ENCODE measurements at regions of chr2 and their contacts with region 1.

Region 1: GRCh38 chr2:218395797-218396687 is 3.6 kb upstream of the CTDSP1 start:
- DNase-seq: peak; percentile 97
- H3K4me3 ChIP-seq: peak overlapping the region; percentile 88 to 96 (median 93)
- H3K27ac ChIP-seq: peak overlapping the region; percentile 98 to 100 (median 100)
- H3K4me1 ChIP-seq: peaks cover 17 to 41% (median 36%) of the 10 kb centered on the region in 4 donors
- H3K27me3 ChIP-seq: no peaks in the 10 kb centered on the region
- CTCF ChIP-seq: peak; percentile 94 to 98 (median 97)
- EP300 ChIP-seq: no peak
- POLR2A ChIP-seq: peak; percentile 23

Region 2: GRCh38 chr2:218269899-218270720 is 125.9 kb before region 1 on chr2 and contains the starts of genes AAMP and PNKD:
- intact Hi-C with region 1: loop called (anchors 5 kb)
- DNase-seq: peak; percentile 100
- H3K4me3 ChIP-seq: peak within 1 kb of the TSS; percentile 86 to 94 (median 90)
- H3K27ac ChIP-seq: peak within 1 kb of the TSS; percentile 79 to 87 (median 84)
- H3K4me1 ChIP-seq: peaks cover 47 to 72% (median 52%) of the 10 kb centered on the region in 4 donors
- H3K27me3 ChIP-seq: no peaks in the 10 kb centered on the region
- CTCF ChIP-seq: peak in 2 of 3 experiments; percentile 25 to 28
- EP300 ChIP-seq: no peak
- POLR2A ChIP-seq: peak; percentile 49
- total RNA-seq, gene AAMP: 104 to 169 (median 144) TPM
- total RNA-seq, gene PNKD: 40.3 to 74.1 (median 56.5) TPM

Region 3: DNA sequence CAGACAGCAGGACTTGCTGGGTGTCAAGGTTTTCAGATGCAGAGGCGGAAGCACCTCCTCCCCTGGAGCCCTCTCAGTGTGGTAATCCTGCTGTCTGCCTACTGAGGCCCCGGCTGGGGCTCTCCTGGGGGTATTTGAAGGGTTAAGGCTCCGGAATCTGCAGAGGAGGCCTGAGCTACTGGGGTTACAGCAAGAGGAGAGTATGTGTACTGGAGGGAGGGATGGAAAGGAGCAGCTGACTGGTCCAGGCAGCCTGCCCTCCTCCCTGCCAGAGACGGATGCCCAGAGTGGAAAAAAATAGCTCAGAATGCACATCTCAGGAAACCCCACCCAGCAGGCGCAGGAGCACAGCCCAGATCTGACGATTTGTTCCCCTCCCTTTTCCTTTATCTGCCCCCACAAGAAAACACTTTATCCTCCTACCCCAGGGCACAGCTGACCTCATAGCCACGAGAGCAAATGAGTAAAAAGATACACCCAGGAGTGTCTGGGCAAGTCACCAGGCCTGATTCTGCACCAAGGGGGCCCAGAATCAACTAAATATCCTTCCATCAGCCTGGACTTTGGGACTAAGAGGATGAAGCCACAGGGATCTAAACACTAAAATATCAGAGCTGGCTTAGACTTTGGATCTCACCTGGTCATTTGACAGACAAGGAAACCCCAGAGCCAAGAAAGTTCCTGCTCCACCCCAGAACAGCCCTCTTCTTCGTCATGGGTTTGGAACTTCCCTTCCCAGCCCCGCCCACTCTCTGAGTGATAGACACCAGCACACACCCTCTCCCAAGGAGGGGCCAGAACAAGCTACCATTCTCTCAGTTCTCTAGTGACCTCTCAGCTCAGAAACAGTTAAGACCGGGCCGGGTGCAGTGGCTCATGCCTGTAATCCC is 109.2 kb before region 1 on chr2:
- intact Hi-C with region 1: loop called (anchors 2 kb)
- DNase-seq: peak; percentile 99
- H3K4me3 ChIP-seq: peak overlapping the region; percentile 50 to 63 (median 54)
- H3K27ac ChIP-seq: peak overlapping the region; percentile 93 to 100 (median 96)
- H3K4me1 ChIP-seq: peaks cover 88 to 100% (median 98%) of the 10 kb centered on the region in 4 donors
- H3K27me3 ChIP-seq: no peaks in the 10 kb centered on the region
- CTCF ChIP-seq: peak in 1 of 3 experiments; percentile 13
- EP300 ChIP-seq: no peak
- POLR2A ChIP-seq: peak; percentile 36

Region 4: GRCh38 chr2:218710687-218711549 is 314.9 kb after region 1 on chr2 and contains the start of gene TTLL4:
- intact Hi-C with region 1: no loop called
- DNase-seq: peak; percentile 99
- H3K4me3 ChIP-seq: peak within 1 kb of the TSS; percentile 83 to 95 (median 86)
- H3K27ac ChIP-seq: peak within 1 kb of the TSS; percentile 92 to 97 (median 94)
- H3K4me1 ChIP-seq: peaks cover 4 to 33% (median 20%) of the 10 kb centered on the region in 4 donors
- H3K27me3 ChIP-seq: no peaks in the 10 kb centered on the region
- CTCF ChIP-seq: peak; percentile 78 to 95 (median 86)
- EP300 ChIP-seq: no peak
- POLR2A ChIP-seq: peak; percentile 13
- total RNA-seq, gene TTLL4: 5.8 to 11.3 (median 8.3) TPM